GM23248 (cell line): ENCODE measurements at regions of chr3 and their contacts with region 1.

Region 1: DNA sequence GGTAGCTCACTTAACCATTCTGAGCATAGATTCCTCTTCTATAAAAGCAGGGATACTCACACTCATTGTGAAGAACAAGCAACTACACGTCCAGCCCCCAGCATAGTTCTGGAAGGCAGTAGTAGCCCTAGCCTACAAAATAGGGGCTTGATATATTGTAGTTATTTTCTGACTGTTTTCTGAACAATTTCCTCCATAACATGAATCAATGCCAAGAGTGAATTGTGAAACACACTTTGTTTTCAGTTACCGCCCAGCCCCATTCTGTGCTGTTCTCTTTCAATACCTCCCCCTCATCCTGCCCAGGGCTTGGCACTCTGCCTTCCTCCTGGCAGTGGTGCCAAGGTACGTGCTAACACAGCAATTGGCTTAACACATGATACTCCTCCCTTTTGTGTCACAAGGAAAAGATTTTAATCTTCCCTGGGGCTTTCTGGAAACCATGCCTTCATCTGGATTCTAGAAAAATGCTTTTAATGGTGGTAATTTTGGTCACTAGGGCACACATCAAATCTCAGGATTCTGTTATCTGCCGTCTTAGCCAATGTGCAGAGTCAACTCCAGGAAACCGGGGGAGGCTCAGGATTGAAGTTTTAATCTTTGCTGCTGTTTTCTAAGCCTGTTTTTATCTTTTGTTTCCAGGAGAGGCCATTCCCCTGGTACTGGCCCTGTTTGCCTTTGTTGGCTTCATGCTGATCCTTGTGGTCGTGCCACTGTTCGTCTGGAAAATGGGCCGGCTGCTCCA is 37.2 kb downstream of the IL20RB start:
- DNase-seq: peak; percentile 93
- H3K4me3 ChIP-seq: peak overlapping the region; percentile 16
- H3K27ac ChIP-seq: peak overlapping the region; percentile 91
- H3K4me1 ChIP-seq: peaks cover 21% of the 10 kb centered on the region
- H3K27me3 ChIP-seq: no peaks in the 10 kb centered on the region

Region 2: DNA sequence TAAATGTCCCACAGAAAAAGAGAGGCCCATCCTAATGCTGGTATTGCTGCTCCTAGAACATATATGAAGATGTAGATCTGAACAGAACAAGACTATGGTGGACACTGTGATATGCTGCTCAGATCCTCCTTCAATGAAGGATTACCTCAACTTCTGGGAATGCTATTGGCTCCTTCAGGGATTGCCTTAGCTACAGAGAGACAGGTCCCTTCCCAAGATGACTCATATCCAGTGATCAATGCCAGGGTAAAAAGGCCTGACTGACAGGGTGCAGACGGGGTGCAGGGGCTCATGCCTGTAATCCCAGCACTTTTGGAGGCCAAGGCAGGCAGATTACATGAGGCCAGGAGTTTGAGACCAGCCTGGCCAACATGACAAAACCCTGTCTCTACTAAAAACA is 222.2 kb before region 1 on chr3:
- in situ Hi-C with region 1: loop called (anchors 10 kb)
- DNase-seq: peak; percentile 39
- H3K4me3 ChIP-seq: no peak overlapping the region
- H3K27ac ChIP-seq: no peak overlapping the region
- H3K4me1 ChIP-seq: no peaks in the 10 kb centered on the region
- H3K27me3 ChIP-seq: no peaks in the 10 kb centered on the region

Region 3: GRCh38 chr3:137866015-137866414 is 871.1 kb after region 1 on chr3:
- in situ Hi-C with region 1: no loop called
- DNase-seq: no peak
- H3K4me3 ChIP-seq: no peak overlapping the region
- H3K27ac ChIP-seq: no peak overlapping the region
- H3K4me1 ChIP-seq: no peaks in the 10 kb centered on the region
- H3K27me3 ChIP-seq: no peaks in the 10 kb centered on the region